ENCODE measurements at regions of chr3 and their contacts with region 1.

Region 1: GRCh38 chr3:140972833-140973232 is 31.2 kb downstream of the SLC25A36 start:
- DNase-seq: peak; percentile 26
- ATAC-seq: peak; percentile 79
- H3K4me3 ChIP-seq: no peak overlapping the region
- H3K27ac ChIP-seq: no peak overlapping the region
- H3K4me1 ChIP-seq: no peaks in the 10 kb centered on the region
- H3K27me3 ChIP-seq: no peaks in the 10 kb centered on the region
- CTCF ChIP-seq: peak; percentile 50
- POLR2A ChIP-seq: no peak
- RAD21 ChIP-seq: peak; percentile 44

Region 2: DNA sequence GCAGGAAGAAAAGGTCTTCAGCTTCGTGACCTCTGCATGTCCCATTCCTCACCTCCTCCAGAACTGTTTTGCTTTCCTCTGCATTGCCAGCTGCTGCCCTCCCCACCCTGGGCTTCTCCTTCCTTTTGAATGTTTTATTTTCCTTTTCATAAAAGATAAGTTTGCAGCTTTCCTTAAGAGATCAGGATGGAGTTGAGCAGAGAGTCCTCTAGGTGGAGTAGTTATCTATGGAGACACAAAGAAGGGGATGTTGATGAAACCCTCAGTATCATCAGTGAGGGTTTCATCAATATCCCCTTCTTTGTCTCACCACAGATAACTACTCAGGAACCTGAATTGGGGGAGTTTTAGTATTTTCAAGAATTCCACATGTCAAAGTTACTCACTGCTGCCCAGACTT is 50.2 kb before region 1 on chr3:
- CTCF ChIA-PET with region 1: interaction called, 4 read pairs
- POLR2A ChIA-PET with region 1: no interaction called
- dilution Hi-C with region 1: no loop called
- in situ Hi-C with region 1: no loop called
- intact Hi-C with region 1: loop called (anchors 2 kb)
- DNase-seq: peak; percentile 49
- ATAC-seq: peak; percentile 91
- H3K4me3 ChIP-seq: no peak overlapping the region
- H3K27ac ChIP-seq: no peak overlapping the region
- H3K4me1 ChIP-seq: no peaks in the 10 kb centered on the region
- H3K27me3 ChIP-seq: peaks cover 6% of the 10 kb centered on the region
- CTCF ChIP-seq: peak; percentile 62
- POLR2A ChIP-seq: no peak
- RAD21 ChIP-seq: peak; percentile 61

Region 3: GRCh38 chr3:141151439-141151838 is 178.6 kb after region 1 on chr3:
- CTCF ChIA-PET with region 1: no interaction called
- POLR2A ChIA-PET with region 1: no interaction called
- dilution Hi-C with region 1: no loop called
- in situ Hi-C with region 1: no loop called
- intact Hi-C with region 1: no loop called
- DNase-seq: no peak
- ATAC-seq: peak; percentile 35; the same call in 1 of the 2 replicates
- H3K4me3 ChIP-seq: no peak overlapping the region
- H3K27ac ChIP-seq: no peak overlapping the region
- H3K4me1 ChIP-seq: no peaks in the 10 kb centered on the region
- H3K27me3 ChIP-seq: no peaks in the 10 kb centered on the region
- CTCF ChIP-seq: no peak
- POLR2A ChIP-seq: no peak
- RAD21 ChIP-seq: no peak

Measured in IMR-90 (cell line).